OCI-LY7 (cell line): ENCODE measurements at regions of chr6 and their contacts with region 1.

Region 1: GRCh38 chr6:142819603-142820337 is 125.2 kb downstream of the HIVEP2 start:
- DNase-seq: peak; percentile 71
- H3K4me3 ChIP-seq: peak overlapping the region; percentile 67
- H3K27ac ChIP-seq: peak overlapping the region; percentile 60
- H3K4me1 ChIP-seq: peaks cover 35% of the 10 kb centered on the region
- CTCF ChIP-seq: no peak

Region 2: DNA sequence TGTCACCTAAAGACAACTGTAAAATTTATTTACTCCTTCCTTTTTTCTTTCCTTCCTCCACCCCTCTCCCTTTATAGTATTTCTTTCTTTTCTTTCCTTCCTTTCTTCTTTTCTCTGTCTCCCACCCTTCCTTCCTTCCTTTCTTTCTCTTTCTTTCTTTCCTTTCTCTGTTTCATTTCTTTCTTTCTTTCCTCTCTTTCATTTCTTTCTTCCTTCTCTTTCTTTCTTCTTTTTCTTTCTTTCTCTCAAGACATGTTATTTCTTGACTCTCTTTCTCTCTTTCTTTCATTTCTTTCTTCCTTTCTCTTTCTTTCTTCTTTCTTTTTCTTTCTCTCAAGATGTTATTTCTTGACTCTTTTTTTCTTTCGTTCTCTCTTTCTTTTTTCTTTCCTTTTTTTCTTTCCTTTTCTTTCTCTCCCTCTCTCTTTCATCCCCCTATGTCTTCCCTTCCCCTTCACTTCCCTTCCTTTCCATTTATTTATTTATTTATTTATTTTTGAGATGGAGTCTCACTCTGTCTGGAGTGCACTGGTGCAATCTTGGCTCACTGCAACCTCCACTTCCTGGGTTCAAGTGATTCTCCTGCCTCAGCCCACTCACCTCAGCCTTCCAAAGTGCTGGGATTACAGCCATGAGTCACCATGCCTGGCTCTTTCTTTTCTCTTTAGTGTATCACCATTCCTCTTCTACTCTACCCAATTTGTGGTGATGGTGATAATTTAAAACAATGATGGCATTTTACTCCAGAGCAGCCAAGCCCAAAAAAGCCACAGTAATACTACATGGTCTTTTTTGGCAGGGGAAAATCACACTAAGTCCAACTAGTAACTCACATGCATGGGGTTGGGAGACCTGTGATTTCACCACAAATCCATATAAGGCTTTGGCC is 329.8 kb before region 1 on chr6:
- CTCF ChIA-PET with region 1: no interaction called
- POLR2A ChIA-PET with region 1: no interaction called
- intact Hi-C with region 1: no loop called
- DNase-seq: no peak
- H3K4me3 ChIP-seq: no peak overlapping the region
- H3K27ac ChIP-seq: no peak overlapping the region
- H3K4me1 ChIP-seq: no peaks in the 10 kb centered on the region
- CTCF ChIP-seq: no peak

Region 3: DNA sequence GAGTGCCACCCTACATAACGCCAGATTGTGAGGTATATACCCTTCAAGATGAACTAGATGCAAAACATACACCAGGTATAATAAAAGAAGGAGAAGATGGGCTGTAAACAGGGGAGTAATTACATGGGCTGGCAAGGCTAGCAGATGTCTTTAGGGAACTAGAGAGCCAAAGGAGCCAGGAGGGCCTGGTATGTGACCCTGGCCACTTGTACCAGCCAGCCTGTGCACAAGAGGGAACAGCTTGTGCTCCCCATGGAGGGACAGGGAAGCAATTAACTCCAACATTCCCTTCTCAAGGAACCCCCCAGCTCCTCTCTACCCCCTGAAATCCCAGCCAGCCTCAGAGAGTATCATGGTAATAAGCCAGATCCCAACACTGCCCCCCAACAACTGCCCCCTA is 14.7 kb before region 1 on chr6:
- CTCF ChIA-PET with region 1: no interaction called
- POLR2A ChIA-PET with region 1: interaction called, 13 read pairs
- intact Hi-C with region 1: no loop called
- DNase-seq: no peak
- H3K4me3 ChIP-seq: no peak overlapping the region
- H3K27ac ChIP-seq: no peak overlapping the region
- H3K4me1 ChIP-seq: no peaks in the 10 kb centered on the region
- CTCF ChIP-seq: no peak

Region 4: GRCh38 chr6:142838821-142839685 is 19.3 kb after region 1 on chr6:
- CTCF ChIA-PET with region 1: no interaction called
- POLR2A ChIA-PET with region 1: interaction called, 26 read pairs
- intact Hi-C with region 1: no loop called
- DNase-seq: no peak
- H3K4me3 ChIP-seq: no peak overlapping the region
- H3K27ac ChIP-seq: no peak overlapping the region
- H3K4me1 ChIP-seq: peaks cover 43% of the 10 kb centered on the region
- CTCF ChIP-seq: no peak